ENCODE measurements at regions of chr4 and their contacts with region 1.

Region 1: DNA sequence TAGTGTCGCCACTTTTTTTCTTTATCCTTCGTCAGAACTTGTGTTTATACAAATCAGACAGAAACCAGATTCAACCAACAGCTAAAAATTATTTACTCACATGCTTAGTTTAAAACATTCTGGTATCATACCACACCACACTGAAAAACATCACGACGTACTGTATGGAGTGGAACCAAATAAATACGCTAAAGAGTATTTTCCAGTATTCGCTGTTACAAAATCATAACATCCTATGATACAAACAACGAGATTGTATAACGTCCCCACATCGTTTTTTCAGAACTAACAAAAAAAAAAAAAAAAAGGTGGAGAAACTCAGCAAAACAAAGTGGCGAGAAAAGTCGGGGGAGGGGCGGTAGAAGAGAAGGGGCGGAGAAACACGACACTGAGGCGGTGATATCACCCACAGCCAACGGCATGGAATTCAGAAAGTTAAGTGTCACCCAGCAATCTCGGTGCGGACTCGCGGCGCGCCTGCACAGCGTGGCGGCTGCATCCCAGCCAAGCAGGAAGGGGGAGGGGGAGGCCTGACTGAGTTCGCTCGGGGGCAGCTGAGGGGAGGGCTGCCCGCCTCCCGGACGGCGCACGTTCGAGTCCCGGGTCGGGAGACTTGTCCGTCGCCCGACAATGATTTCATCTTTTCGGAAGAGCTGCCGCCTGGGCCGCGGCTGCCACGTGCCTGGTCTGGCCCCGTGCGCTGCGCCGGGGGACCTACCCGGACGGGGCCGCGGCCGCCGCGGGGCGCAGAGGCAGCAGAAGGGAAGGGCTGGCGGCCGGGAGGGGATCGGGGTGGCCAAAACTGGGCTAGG is 920 bp downstream of the SETD7 start:
- DNase-seq: peak; percentile 83 to 94 (median 91)
- H3K4me3 ChIP-seq: peak overlapping the region; percentile 63 to 76
- H3K4me3 Mint-ChIP-seq: peak overlapping the region; percentile 92 to 99 (median 97)
- H3K27ac ChIP-seq: peak overlapping the region; percentile 91
- H3K27ac Mint-ChIP-seq: peak overlapping the region; percentile 96 to 100 (median 98)
- H3K4me1 ChIP-seq: peaks cover 41% of the 10 kb centered on the region
- H3K4me1 Mint-ChIP-seq: peaks cover 29 to 82% (median 59%) of the 10 kb centered on the region in 4 donors
- H3K27me3 ChIP-seq: no peaks in the 10 kb centered on the region
- H3K27me3 Mint-ChIP-seq: peaks cover 0 to 1% of the 10 kb centered on the region in 2 donors

Region 2: DNA sequence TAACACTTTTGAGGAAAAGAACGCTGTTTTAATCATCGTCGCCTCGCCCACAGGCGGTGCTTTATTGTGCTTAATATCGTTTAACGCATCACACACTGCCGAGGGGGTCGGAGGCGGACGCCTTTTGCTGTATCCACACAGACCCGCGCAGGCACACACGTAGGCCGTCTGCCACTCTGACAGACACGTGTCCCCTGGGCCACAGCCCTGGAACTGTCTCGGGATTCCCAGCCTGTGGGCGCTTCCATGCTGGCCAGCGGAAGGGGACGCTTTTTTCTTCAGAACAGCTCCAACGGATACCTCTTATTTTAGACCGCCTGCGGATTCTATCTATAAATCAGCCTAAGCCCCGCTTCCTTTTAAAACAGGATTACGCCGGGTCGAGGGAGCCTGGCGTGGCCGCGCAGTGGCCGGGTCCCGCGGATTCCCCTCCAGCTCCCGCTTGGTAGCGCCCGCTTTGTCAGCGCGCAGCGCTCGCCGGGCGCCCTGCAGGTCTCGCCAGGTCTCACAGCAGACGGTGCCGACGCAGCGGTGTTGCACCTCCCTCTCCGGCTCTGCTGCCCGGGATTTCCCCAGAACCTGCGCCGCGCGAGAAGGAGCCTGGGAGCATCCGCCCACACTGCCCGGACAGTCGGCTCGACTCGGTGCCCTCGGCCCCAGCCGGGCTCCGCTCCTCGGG is 539.7 kb before region 1 on chr4 and contains the start of gene NOCT:
- CTCF ChIA-PET with region 1: interaction called, 4 read pairs
- POLR2A ChIA-PET with region 1: interaction called, 6 read pairs
- intact Hi-C with region 1: loop called (anchors 1 kb)
- DNase-seq: peak; percentile 90 to 96 (median 93)
- H3K4me3 ChIP-seq: peak within 1 kb of the TSS; percentile 20 to 66
- H3K4me3 Mint-ChIP-seq: peak within 1 kb of the TSS; percentile 87 to 94 (median 90)
- H3K27ac ChIP-seq: peak within 1 kb of the TSS; percentile 84
- H3K27ac Mint-ChIP-seq: peak within 1 kb of the TSS; percentile 93 to 100 (median 99)
- H3K4me1 ChIP-seq: peaks cover 18% of the 10 kb centered on the region
- H3K4me1 Mint-ChIP-seq: peaks cover 13 to 44% (median 17%) of the 10 kb centered on the region in 4 donors
- H3K27me3 ChIP-seq: no peaks in the 10 kb centered on the region
- H3K27me3 Mint-ChIP-seq: no peaks in the 10 kb centered on the region
- total RNA-seq, gene NOCT: 1.4 to 1.7 TPM

Region 3: DNA sequence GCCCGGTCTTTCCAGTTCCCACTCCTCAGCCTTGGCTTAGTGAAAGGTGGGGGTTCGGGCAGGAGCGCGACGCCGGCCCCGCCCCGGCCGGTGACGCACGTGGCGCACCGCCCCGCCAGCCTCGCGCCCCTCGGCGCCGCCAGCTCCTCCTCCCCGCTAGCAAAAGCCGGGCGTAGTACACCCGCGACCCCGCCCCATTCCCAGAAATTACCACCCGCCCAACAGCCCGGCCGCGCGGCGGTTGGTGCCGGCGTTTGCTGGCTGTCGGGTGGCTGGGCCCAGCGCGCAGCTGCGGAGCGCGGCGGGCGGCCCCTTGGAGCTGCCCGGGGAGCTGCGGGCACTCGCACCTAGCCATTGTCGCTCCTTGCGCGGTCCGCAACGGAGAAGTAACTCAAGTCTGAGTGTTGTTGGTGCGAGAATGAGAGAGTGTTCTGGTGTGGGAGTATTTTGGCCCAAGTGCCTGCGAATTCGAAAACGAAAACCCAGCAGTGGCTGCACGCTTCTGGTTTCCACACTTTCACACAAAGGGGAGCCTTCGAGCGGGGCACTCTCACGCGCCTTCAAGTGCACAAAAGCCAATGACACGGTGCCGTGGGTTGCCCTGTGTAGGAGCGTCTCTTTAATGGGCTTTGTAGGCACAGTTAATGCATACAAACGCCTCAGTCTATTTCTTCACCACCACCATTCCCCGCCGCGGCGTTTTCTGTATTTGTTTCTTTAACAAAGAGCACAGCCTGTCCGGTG is 377.1 kb before region 1 on chr4:
- CTCF ChIA-PET with region 1: no interaction called
- POLR2A ChIA-PET with region 1: interaction called, 8 read pairs
- intact Hi-C with region 1: loop called (anchors 5 kb)
- DNase-seq: peak; percentile 92 to 94 (median 92)
- H3K4me3 ChIP-seq: peak overlapping the region; percentile 88 to 89
- H3K4me3 Mint-ChIP-seq: peak overlapping the region; percentile 89 to 94 (median 92)
- H3K27ac ChIP-seq: peak overlapping the region; percentile 96
- H3K27ac Mint-ChIP-seq: peak overlapping the region; percentile 92 to 97 (median 96)
- H3K4me1 ChIP-seq: peaks cover 17% of the 10 kb centered on the region
- H3K4me1 Mint-ChIP-seq: peaks cover 14 to 29% (median 18%) of the 10 kb centered on the region in 4 donors
- H3K27me3 ChIP-seq: no peaks in the 10 kb centered on the region
- H3K27me3 Mint-ChIP-seq: no peaks in the 10 kb centered on the region

Region 4: GRCh38 chr4:139453371-139454110 is 101.6 kb before region 1 on chr4:
- CTCF ChIA-PET with region 1: interaction called, 9 read pairs
- POLR2A ChIA-PET with region 1: interaction called, 73 read pairs
- intact Hi-C with region 1: loop called (anchors 1 kb)
- DNase-seq: peak; percentile 97 to 99 (median 98)
- H3K4me3 ChIP-seq: peak overlapping the region; percentile 68 to 71
- H3K4me3 Mint-ChIP-seq: peak overlapping the region; percentile 95 to 99 (median 97)
- H3K27ac ChIP-seq: peak overlapping the region; percentile 89
- H3K27ac Mint-ChIP-seq: peak overlapping the region; percentile 98 to 100 (median 99)
- H3K4me1 ChIP-seq: peaks cover 59% of the 10 kb centered on the region
- H3K4me1 Mint-ChIP-seq: peaks cover 48 to 73% (median 61%) of the 10 kb centered on the region in 4 donors
- H3K27me3 ChIP-seq: no peaks in the 10 kb centered on the region
- H3K27me3 Mint-ChIP-seq: no peaks in the 10 kb centered on the region

Region 5: GRCh38 chr4:139568206-139568955 is 13.3 kb after region 1 on chr4:
- CTCF ChIA-PET with region 1: no interaction called
- POLR2A ChIA-PET with region 1: interaction called, 13 read pairs
- intact Hi-C with region 1: no loop called
- DNase-seq: no peak
- H3K4me3 ChIP-seq: no peak overlapping the region
- H3K4me3 Mint-ChIP-seq: no peak overlapping the region
- H3K27ac ChIP-seq: no peak overlapping the region
- H3K27ac Mint-ChIP-seq: no peak overlapping the region
- H3K4me1 ChIP-seq: no peaks in the 10 kb centered on the region
- H3K4me1 Mint-ChIP-seq: no peaks in the 10 kb centered on the region
- H3K27me3 ChIP-seq: no peaks in the 10 kb centered on the region
- H3K27me3 Mint-ChIP-seq: no peaks in the 10 kb centered on the region

Region 6: DNA sequence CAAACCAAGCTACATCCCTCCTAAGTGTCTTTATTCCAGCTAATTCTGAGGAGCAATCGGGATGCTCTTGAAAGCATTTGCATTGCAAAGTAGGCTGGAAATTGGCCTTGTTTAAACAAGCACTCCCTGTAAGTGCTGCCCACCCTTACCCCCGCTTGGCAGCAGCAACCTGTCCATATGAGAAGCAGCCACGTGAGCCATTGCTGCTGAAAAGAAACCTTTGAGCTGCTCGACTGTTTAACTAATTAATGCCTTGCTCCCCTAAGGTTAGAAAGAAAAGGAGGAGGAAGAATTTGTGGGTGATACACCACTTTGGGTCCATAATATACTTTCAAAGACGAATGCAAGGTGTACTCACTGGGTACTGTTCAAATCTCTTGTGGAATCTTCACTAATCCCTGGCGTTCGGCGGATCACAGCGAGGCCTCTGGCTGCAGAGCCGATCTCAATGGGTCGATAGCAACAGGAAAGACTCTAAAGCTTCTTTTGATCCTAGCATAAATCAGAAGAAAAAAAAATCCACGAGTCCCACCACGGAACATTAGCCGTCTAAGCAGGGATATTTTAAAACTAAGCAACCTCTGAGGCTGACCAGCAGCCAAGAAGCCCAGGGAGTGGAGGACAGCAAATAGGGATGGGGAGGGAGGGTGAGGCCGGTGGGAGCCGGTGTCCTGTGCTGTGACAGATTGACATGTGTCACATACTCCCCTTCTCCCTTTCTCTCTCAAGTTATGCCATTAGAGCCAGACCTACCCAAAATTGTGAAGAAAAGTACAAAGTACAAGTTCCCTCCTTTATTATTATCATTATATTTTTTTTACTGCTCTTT is 73.3 kb after region 1 on chr4:
- CTCF ChIA-PET with region 1: no interaction called
- POLR2A ChIA-PET with region 1: no interaction called
- intact Hi-C with region 1: no loop called
- DNase-seq: no peak
- H3K4me3 ChIP-seq: no peak overlapping the region
- H3K4me3 Mint-ChIP-seq: no peak overlapping the region
- H3K27ac ChIP-seq: no peak overlapping the region
- H3K27ac Mint-ChIP-seq: no peak overlapping the region
- H3K4me1 ChIP-seq: no peaks in the 10 kb centered on the region
- H3K4me1 Mint-ChIP-seq: no peaks in the 10 kb centered on the region
- H3K27me3 ChIP-seq: no peaks in the 10 kb centered on the region
- H3K27me3 Mint-ChIP-seq: peaks cover 3 to 10% of the 10 kb centered on the region in 2 donors

Region 7: DNA sequence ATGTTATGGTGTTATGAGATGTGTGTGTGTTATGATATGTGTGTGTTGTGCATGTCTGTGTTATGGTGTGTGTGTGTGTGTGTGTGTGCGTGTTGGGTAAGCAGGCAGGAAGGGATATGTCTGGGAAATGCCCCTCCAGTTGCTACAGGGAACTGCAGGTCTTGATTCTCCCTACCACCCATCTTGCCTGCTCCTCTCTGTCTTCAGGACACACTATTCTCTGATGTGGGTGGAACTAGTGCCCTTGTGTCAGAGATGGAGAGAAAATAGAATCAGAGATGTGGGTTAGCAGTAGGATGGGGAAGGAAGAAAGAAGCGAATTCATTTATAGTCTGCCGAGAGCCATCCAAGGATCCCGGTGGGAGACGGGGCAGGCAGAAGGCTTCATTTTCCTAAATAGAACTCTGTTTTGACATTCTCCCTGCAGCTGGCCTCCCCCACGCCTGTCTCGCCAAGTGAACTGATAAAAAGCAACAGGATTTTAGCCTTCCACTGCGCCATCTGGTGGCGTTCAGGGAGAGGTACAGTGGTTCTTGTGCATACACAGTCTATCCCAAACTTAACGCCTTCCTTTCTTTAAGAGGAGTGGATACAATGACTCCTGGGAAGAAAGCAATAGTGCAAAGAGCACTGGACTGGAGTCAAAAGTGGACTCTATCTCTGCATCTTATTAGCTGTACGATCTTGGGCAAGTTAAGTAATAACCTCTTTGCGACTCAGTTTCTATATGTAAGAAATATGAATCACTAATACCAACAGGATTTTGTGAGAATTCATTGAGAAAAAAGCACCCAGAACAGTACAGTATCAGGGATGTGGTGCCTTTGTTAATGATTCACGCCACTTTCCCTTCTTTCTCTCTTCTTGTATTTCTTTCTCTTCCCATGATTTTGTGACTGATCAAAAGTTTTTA is 96.4 kb after region 1 on chr4:
- CTCF ChIA-PET with region 1: interaction called, 12 read pairs
- POLR2A ChIA-PET with region 1: interaction called, 22 read pairs
- intact Hi-C with region 1: loop called (anchors 2 kb)
- DNase-seq: peak; percentile 56 to 68 (median 61)
- H3K4me3 ChIP-seq: no peak overlapping the region
- H3K4me3 Mint-ChIP-seq: peak overlapping the region in 4 of 8 donors; percentile 6 to 32 (median 14)
- H3K27ac ChIP-seq: no peak overlapping the region
- H3K27ac Mint-ChIP-seq: no peak overlapping the region
- H3K4me1 ChIP-seq: no peaks in the 10 kb centered on the region
- H3K4me1 Mint-ChIP-seq: peaks cover 0 to 7% (median 5%) of the 10 kb centered on the region in 4 donors
- H3K27me3 ChIP-seq: no peaks in the 10 kb centered on the region
- H3K27me3 Mint-ChIP-seq: peaks cover 0 to 2% of the 10 kb centered on the region in 2 donors

Region 8: DNA sequence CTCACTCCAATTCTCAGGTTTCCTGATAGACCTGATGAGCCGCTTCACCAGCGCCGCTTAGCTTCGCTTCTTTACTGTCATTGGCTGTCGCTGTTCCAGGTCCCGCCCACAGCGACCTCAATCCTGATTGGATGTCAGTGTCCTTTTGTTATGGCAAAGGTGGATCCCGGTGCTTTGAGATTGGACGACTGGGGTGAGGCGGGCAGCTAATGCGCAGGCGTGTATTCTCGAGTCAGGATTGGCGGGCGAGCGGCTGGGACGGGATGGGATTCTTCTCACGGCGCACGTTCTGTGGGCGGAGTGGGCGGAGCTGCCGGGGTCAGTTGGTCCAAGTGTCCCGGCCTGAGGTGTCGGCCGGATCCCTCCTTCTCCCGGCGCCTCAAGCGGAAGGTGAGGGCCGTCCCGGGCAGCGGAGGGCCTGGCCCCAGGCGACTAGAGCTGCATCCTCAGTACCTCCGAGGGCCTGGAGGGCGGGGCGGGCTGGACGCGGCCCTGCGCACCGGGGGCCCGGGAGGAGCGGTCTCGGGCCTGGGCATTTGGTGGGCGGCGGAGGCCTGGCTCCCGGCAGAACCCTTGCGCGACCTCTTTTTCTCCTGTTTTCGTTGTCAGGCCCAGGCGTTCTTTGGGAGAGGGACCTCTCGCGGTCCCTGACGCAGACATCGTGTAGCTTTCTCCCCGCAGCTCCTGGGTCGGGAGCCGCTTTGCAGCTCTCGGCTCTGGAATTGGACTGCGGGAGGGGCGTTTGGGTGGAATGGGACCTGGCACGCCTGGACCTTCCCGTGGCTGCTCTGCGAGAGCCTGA is 818.4 kb after region 1 on chr4 and contains the start of gene SCOC:
- CTCF ChIA-PET with region 1: no interaction called
- POLR2A ChIA-PET with region 1: no interaction called
- intact Hi-C with region 1: loop called (anchors 2 kb)
- DNase-seq: peak; percentile 95 to 99 (median 96)
- H3K4me3 ChIP-seq: peak within 1 kb of the TSS; percentile 72 to 75
- H3K4me3 Mint-ChIP-seq: peak within 1 kb of the TSS in 3 of 8 donors; percentile 83 to 90 (median 87)
- H3K27ac ChIP-seq: peak within 1 kb of the TSS; percentile 69
- H3K27ac Mint-ChIP-seq: peak within 1 kb of the TSS in 6 of 7 donors; percentile 47 to 87 (median 76)
- H3K4me1 ChIP-seq: peaks cover 23% of the 10 kb centered on the region
- H3K4me1 Mint-ChIP-seq: peaks cover 24 to 37% (median 28%) of the 10 kb centered on the region in 4 donors
- H3K27me3 ChIP-seq: no peaks in the 10 kb centered on the region
- H3K27me3 Mint-ChIP-seq: no peaks in the 10 kb centered on the region
- total RNA-seq, gene SCOC: 21.8 to 22.8 TPM